IMR-90 (cell line): ENCODE measurements at regions of chr1 and their contacts with region 1.

Region 1: GRCh38 chr1:55833529-55834091 is 618.4 kb upstream of the USP24 start:
- DNase-seq: peak; percentile 92
- ATAC-seq: peak; percentile 74
- H3K4me3 ChIP-seq: no peak overlapping the region
- H3K27ac ChIP-seq: peak overlapping the region; percentile 52; the same call in 1 of the 2 replicates
- H3K4me1 ChIP-seq: peaks cover 11% of the 10 kb centered on the region
- H3K27me3 ChIP-seq: no peaks in the 10 kb centered on the region
- CTCF ChIP-seq: no peak
- POLR2A ChIP-seq: no peak
- RAD21 ChIP-seq: no peak

Region 2: DNA sequence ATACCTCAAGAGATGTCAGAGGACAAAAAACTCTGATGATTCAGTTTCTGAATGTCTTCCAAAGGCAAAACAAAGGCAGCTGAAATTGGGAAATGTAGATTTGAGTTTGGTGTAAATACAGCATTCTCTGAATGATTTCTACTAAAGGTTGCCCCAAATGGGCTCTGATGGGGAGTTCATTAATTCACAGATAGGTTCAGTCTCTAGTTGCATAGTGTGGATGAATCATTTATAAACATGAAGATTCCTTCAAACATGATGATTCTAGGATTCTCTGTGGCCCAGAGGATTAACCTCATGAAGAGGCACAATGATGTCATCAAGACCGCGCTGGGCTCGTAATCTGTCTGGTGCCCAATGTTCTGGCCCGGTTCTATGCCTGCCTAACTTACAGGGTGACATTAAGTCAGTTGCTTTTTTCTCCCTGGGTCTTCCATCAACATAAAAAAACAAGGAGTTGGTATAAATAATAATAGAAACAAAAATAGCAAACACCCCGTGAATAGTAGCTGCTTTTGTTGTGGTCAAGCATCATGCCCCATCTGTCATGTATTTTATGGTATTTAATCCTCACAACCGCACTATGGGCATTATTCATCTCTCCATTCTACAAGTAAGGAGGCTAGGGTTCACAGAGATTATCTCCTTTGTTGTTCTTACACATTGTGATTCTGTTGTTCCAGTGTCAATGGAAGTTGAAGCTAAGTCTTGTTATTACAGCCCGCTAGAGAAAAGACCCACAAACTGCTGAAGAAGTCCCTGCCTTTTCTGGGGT is 108.9 kb before region 1 on chr1:
- CTCF ChIA-PET with region 1: no interaction called
- POLR2A ChIA-PET with region 1: no interaction called
- dilution Hi-C with region 1: no loop called
- in situ Hi-C with region 1: no loop called
- intact Hi-C with region 1: loop called (anchors 2 kb)
- DNase-seq: peak; percentile 97
- ATAC-seq: peak; percentile 87
- H3K4me3 ChIP-seq: no peak overlapping the region
- H3K27ac ChIP-seq: peak overlapping the region; percentile 84
- H3K4me1 ChIP-seq: peaks cover 17% of the 10 kb centered on the region
- H3K27me3 ChIP-seq: no peaks in the 10 kb centered on the region
- CTCF ChIP-seq: no peak
- POLR2A ChIP-seq: no peak
- RAD21 ChIP-seq: no peak; the same call in 1 of the 2 replicates

Region 3: DNA sequence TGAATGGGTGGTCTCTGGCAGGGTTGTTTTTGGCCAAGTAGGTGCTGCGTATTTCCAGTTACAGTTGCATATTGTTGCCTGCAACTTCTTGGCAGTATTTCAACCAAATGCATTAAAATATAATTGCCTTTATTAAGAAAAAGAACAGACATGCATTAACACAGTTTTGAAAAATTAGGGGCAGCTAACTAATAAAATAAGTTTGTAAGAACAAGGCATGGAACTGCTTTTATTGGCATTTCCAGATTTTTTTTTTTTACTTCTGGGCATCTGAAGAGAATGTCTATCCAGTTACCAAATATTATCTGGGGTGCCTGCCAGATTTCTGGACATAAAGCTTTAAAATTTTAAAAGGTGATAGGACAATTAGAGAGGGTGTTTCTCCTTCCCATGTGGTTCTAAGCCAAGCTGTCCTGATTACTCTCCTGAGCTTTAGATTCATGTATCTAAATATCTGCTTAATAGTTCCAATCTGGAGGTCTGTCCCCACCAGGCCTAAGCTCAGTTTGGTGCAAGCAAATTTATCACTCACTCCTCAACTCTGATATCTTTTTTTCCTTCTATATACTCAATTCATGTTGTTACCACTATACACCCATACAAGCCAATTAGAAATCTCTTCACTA is 65.2 kb before region 1 on chr1:
- CTCF ChIA-PET with region 1: no interaction called
- POLR2A ChIA-PET with region 1: no interaction called
- dilution Hi-C with region 1: no loop called
- in situ Hi-C with region 1: no loop called
- intact Hi-C with region 1: no loop called
- DNase-seq: no peak
- ATAC-seq: no peak
- H3K4me3 ChIP-seq: no peak overlapping the region
- H3K27ac ChIP-seq: no peak overlapping the region
- H3K4me1 ChIP-seq: no peaks in the 10 kb centered on the region
- H3K27me3 ChIP-seq: no peaks in the 10 kb centered on the region
- CTCF ChIP-seq: no peak
- POLR2A ChIP-seq: no peak
- RAD21 ChIP-seq: no peak